ENCODE measurements at regions of chr19 and their contacts with region 1.

Region 1: DNA sequence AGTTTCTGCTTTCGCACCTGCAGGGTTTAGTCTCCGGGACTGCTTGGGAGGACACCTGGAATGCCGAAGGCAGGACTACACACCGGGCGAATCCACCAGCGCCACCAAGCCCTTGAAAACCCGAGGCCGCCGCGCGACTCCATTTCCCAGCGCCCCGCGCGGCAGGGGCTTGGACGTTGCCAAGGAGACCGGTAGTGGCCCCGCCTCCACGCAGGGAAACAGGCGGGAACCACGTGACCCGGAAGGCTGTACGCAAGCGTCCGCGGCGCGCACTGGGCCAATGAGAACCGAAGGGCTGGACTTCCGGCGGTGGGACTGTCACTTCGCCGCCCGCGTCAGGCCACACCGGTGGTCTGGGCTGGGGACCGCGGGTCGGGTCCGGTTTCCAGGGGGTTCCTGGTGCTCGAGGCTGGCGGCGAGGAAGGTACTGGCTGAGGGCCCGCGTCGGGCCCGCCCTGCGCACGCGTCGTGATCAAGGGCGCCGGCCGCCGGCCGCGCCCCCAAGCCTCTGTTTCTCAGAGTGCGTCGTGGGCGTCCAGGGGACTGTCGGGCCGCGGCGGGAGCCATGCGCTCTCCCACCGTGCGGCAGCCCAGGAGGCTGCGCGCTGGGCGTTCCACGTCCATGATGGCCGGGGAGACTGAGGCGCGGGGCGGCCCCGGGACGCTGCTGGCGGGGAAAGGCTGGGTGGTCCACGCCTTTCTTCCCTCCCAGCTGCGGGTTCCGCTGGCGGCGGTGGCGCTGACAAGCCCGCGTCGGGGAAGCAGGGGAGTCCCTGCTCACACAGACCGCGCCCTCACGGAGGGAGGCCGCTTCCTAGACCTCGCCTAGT is at the start of gene ZNF324:
- DNase-seq: peak; percentile 99
- total RNA-seq, gene ZNF324: 5.1 TPM

Region 2: GRCh38 chr19:58416604-58417003 is 50.4 kb before region 1 on chr19:
- intact Hi-C with region 1: no loop called
- DNase-seq: no peak

Region 3: GRCh38 chr19:58439576-58440554 is 27.1 kb before region 1 on chr19 and contains the start of gene ZNF132:
- intact Hi-C with region 1: loop called (anchors 1 kb)
- DNase-seq: peak; percentile 97
- total RNA-seq, gene ZNF132: 5.4 TPM

Region 4: GRCh38 chr19:58499021-58499927 is 32.3 kb after region 1 on chr19:
- intact Hi-C with region 1: loop called (anchors 1 kb)
- DNase-seq: peak; percentile 99

Measured in cardiac septum (tissue), 1 donor.